Activated T-helper 1 cell treated with anti-CD3 and anti-CD28 coated beads, Interleukin-12 subunit alpha, Interleukin-12 subunit beta, Interleukin-2, Interleukin-4 antibody, amounts not matched to agents 30 ng/mL and 10 ng/mL and 1 ng/mL, durations not matched to agents 14 hours and 24 hours and 36 hours (primary cell): ENCODE measurements at regions of chr19 and their contacts with region 1.

Region 1: GRCh38 chr19:2427429-2428320 is at the start of gene TIMM13:
- DNase-seq: peak; percentile 96
- H3K4me3 Mint-ChIP-seq: peak within 1 kb of the TSS; percentile 95
- H3K27ac Mint-ChIP-seq: peak within 1 kb of the TSS; percentile 98
- H3K4me1 Mint-ChIP-seq: peaks cover 11% of the 10 kb centered on the region
- H3K27me3 Mint-ChIP-seq: peaks cover 2% of the 10 kb centered on the region
- total RNA-seq, gene TIMM13: 178 and 185 TPM in 2 replicates

Region 2: DNA sequence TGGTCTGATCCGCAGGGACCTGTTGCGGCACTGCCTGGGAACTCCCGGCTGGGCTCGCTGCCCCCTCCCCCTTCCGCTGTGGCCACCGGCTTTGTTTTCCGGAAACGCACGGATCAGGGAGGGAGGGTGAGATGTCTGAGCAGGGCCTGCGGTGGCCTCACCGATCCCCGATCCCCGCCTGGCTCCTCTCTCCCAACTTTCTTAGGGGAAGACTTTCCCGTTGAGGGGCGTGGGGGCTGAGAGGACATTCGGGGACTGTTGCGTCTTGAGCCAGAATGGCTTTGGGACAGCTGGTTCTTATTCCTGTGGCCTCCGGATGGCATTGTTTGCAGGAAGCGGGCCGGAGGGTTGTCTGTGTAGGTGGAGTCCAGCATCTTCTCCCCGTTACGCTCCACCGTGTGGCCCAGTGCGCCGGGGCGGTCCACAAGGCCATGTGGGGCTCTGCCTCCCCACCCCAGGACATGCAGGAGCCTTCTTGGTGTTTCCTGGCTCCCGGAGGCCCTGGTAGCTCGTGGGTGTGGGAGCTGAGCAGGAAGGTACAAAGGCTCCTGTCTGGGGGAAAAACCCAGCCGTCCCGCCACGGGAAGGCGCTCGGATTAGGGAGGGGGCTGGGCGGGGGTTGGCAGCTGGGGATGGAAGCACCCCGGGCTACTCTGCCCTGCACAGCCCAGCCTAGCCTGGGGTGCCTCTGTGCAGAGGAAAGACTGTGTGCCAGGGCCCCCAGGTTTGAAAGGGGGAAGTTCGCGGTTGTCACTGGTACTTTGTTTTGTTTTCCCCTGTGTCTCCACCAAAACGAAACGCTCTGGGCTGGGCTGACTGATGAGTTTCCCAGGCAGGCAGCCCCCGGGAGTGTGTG is 485.4 kb before region 1 on chr19:
- intact Hi-C with region 1: loop called (anchors 2 kb)
- DNase-seq: peak; percentile 82
- H3K4me3 Mint-ChIP-seq: peak overlapping the region; percentile 95
- H3K27ac Mint-ChIP-seq: peak overlapping the region; percentile 93
- H3K4me1 Mint-ChIP-seq: peaks cover 30% of the 10 kb centered on the region
- H3K27me3 Mint-ChIP-seq: no peaks in the 10 kb centered on the region

Region 3: GRCh38 chr19:2328401-2329148 is 99.1 kb before region 1 on chr19 and contains the starts of genes LSM7 and SPPL2B:
- intact Hi-C with region 1: loop called (anchors 1 kb)
- DNase-seq: peak; percentile 91
- H3K4me3 Mint-ChIP-seq: peak within 1 kb of the TSS; percentile 100
- H3K27ac Mint-ChIP-seq: peak within 1 kb of the TSS; percentile 100
- H3K4me1 Mint-ChIP-seq: peaks cover 63% of the 10 kb centered on the region
- H3K27me3 Mint-ChIP-seq: no peaks in the 10 kb centered on the region
- total RNA-seq, gene LSM7: 180 and 193 TPM in 2 replicates
- total RNA-seq, gene SPPL2B: 71.2 and 71.4 TPM in 2 replicates

Region 4: DNA sequence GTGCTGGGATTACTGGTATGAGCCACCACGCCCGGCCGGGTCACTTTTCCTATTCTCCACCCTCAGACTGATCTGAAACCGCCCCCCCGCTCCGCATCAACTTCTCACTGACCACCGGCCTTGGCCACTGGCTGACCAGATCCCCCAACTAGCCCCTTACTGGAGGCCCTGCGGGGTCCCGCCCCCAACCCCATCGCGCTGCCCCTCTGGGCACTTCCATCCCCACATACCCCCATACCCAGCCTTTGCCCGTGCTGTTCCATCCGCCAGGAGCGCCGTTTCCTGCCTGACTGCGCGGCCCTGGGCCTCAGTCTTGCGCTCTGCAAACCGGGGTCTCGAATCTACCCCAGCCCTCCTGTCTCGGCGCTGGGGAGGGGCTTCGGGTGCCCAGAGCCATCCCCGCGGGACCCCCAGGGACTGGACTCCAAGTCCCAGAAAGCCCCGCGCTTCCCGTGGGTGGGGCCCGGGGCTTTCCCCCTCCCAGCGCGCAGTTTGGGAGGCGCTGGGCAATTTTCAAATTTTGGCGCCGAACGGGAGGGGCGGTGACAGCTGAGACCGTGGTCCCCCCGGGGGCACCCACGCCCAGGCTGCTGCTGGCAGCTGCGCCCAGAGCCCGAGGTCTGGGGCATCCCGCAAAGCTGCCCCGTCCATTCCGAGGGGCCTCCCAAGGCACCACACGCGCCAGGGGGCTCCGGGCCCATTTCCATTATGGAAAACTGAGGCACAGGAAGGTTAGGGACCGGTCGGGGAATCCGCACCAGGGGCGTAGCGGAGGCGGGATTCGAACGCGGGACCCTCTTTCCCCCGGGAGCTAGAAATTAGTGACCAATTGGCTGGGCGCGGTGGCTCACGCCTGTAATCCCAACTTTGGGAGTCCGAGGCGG is 34.3 kb after region 1 on chr19:
- intact Hi-C with region 1: loop called (anchors 1 kb)
- DNase-seq: peak; percentile 73
- H3K4me3 Mint-ChIP-seq: peak overlapping the region; percentile 94
- H3K27ac Mint-ChIP-seq: peak overlapping the region; percentile 91
- H3K4me1 Mint-ChIP-seq: peaks cover 23% of the 10 kb centered on the region
- H3K27me3 Mint-ChIP-seq: peaks cover 3% of the 10 kb centered on the region

Region 5: GRCh38 chr19:3626473-3627350 is 1199.0 kb after region 1 on chr19 and contains the start of gene CACTIN:
- intact Hi-C with region 1: loop called (anchors 10 kb)
- DNase-seq: peak; percentile 98
- H3K4me3 Mint-ChIP-seq: peak within 1 kb of the TSS; percentile 89
- H3K27ac Mint-ChIP-seq: peak within 1 kb of the TSS; percentile 97
- H3K4me1 Mint-ChIP-seq: peaks cover 13% of the 10 kb centered on the region
- H3K27me3 Mint-ChIP-seq: no peaks in the 10 kb centered on the region
- total RNA-seq, gene CACTIN: 37.2 and 40.8 TPM in 2 replicates